CD4-positive, alpha-beta memory T cell (primary cell): ENCODE measurements at regions of chr7 and their contacts with region 1.

Region 1: GRCh38 chr7:138738551-138739335 is 37.6 kb upstream of the SVOPL start:
- DNase-seq: peak; percentile 74 to 81 (median 78)
- H3K4me3 ChIP-seq: no peak overlapping the region
- H3K4me3 Mint-ChIP-seq: no peak overlapping the region
- H3K27ac ChIP-seq: no peak overlapping the region
- H3K27ac Mint-ChIP-seq: peak overlapping the region in 5 of 7 donors; percentile 38 to 69 (median 45)
- H3K4me1 ChIP-seq: no peaks in the 10 kb centered on the region
- H3K4me1 Mint-ChIP-seq: peaks cover 2 to 6% (median 4%) of the 10 kb centered on the region in 4 donors
- H3K27me3 ChIP-seq: no peaks in the 10 kb centered on the region
- H3K27me3 Mint-ChIP-seq: peaks cover 0 to 1% of the 10 kb centered on the region in 2 donors

Region 2: GRCh38 chr7:138002096-138002827 is 736.5 kb before region 1 on chr7:
- CTCF ChIA-PET with region 1: interaction called, 4 read pairs
- POLR2A ChIA-PET with region 1: no interaction called
- intact Hi-C with region 1: loop called (anchors 1 kb)
- DNase-seq: peak; percentile 98 to 99 (median 99)
- H3K4me3 ChIP-seq: peak overlapping the region; percentile 86 to 99
- H3K4me3 Mint-ChIP-seq: peak overlapping the region; percentile 93 to 98 (median 95)
- H3K27ac ChIP-seq: peak overlapping the region; percentile 87
- H3K27ac Mint-ChIP-seq: peak overlapping the region; percentile 81 to 98 (median 92)
- H3K4me1 ChIP-seq: peaks cover 37% of the 10 kb centered on the region
- H3K4me1 Mint-ChIP-seq: peaks cover 28 to 50% (median 35%) of the 10 kb centered on the region in 4 donors
- H3K27me3 ChIP-seq: no peaks in the 10 kb centered on the region
- H3K27me3 Mint-ChIP-seq: no peaks in the 10 kb centered on the region

Region 3: GRCh38 chr7:138161600-138162081 is 577.1 kb before region 1 on chr7:
- CTCF ChIA-PET with region 1: interaction called, 99 read pairs
- POLR2A ChIA-PET with region 1: interaction called, 13 read pairs
- intact Hi-C with region 1: loop called (anchors 1 kb)
- DNase-seq: peak; percentile 71 to 82 (median 81)
- H3K4me3 ChIP-seq: no peak overlapping the region
- H3K4me3 Mint-ChIP-seq: no peak overlapping the region
- H3K27ac ChIP-seq: no peak overlapping the region
- H3K27ac Mint-ChIP-seq: no peak overlapping the region
- H3K4me1 ChIP-seq: no peaks in the 10 kb centered on the region
- H3K4me1 Mint-ChIP-seq: no peaks in the 10 kb centered on the region
- H3K27me3 ChIP-seq: no peaks in the 10 kb centered on the region
- H3K27me3 Mint-ChIP-seq: peaks cover 2 to 4% of the 10 kb centered on the region in 2 donors

Region 4: GRCh38 chr7:138166681-138167080 is 572.1 kb before region 1 on chr7:
- CTCF ChIA-PET with region 1: interaction called, 99 read pairs
- POLR2A ChIA-PET with region 1: interaction called, 13 read pairs
- intact Hi-C with region 1: loop called (anchors 1 kb)
- DNase-seq: no peak
- H3K4me3 ChIP-seq: no peak overlapping the region
- H3K4me3 Mint-ChIP-seq: no peak overlapping the region
- H3K27ac ChIP-seq: no peak overlapping the region
- H3K27ac Mint-ChIP-seq: no peak overlapping the region
- H3K4me1 ChIP-seq: no peaks in the 10 kb centered on the region
- H3K4me1 Mint-ChIP-seq: peaks cover 0 to 6% (median under 1%) of the 10 kb centered on the region in 4 donors
- H3K27me3 ChIP-seq: no peaks in the 10 kb centered on the region
- H3K27me3 Mint-ChIP-seq: peaks cover 17 to 23% of the 10 kb centered on the region in 2 donors

Region 5: DNA sequence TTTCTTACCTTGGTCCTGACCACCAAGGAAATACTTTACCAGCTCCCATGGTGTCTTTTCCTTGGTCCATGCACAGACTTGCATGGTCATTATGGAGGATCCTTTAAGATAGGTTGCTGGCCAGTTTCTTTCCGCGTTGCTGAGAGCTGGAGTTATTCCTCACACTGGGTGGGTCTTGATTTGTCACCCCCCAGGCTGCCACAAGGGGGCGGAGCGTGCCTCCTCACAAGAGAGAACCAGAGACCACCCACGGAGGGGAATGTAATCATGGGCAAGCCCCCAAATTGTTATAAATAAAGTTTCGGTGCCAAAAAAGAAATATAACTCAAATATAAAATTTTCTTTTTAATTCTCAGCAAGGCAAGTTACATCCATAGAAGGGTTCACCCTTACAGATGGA is 289.2 kb before region 1 on chr7:
- CTCF ChIA-PET with region 1: interaction called, 27 read pairs
- POLR2A ChIA-PET with region 1: no interaction called
- intact Hi-C with region 1: loop called (anchors 1 kb)
- DNase-seq: peak in 4 of 5 donors; percentile 12 to 30 (median 18)
- H3K4me3 ChIP-seq: no peak overlapping the region
- H3K4me3 Mint-ChIP-seq: no peak overlapping the region
- H3K27ac ChIP-seq: no peak overlapping the region
- H3K27ac Mint-ChIP-seq: peak overlapping the region in 1 of 7 donors; percentile 35
- H3K4me1 ChIP-seq: no peaks in the 10 kb centered on the region
- H3K4me1 Mint-ChIP-seq: no peaks in the 10 kb centered on the region
- H3K27me3 ChIP-seq: no peaks in the 10 kb centered on the region
- H3K27me3 Mint-ChIP-seq: peaks cover 0 to 4% of the 10 kb centered on the region in 2 donors

Region 6: DNA sequence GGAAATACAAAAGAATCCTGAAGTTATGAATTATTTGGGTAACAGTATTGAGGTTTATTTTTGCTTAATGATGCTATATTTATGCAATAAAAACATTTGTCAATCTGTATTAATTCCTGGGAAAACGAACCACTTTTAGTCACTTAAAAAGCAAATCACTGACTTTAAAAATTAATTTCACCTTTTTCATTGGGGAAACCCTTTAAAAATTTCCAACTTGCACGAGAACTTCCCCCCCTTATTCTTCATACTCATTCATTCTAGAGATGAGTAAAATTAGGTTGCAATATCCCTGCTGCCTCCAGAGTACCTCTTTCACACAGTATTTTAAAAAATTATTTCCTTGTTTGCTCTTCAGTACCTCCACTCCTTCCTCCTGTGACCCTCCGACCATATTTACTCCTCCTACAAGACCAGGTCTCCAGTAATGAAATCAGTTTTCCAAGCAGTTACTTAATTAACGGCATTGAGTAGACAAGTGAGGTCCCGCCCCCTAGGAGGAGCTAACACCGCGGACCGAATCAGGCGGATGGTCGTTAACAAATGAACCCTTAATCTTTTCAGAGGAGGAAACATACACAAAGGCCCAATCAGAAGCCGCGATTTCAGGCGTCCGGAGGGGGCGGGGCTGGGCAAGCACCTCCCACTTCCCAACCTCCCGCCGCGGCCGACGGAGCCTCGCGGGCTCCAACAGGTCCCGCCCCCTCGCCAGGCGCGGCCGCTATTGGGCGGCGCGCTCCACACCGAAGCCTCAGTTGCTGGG is 279.1 kb before region 1 on chr7:
- CTCF ChIA-PET with region 1: interaction called, 7 read pairs
- POLR2A ChIA-PET with region 1: no interaction called
- intact Hi-C with region 1: loop called (anchors 5 kb)
- DNase-seq: peak; percentile 98 to 99 (median 98)
- H3K4me3 ChIP-seq: peak overlapping the region in 1 of 2 donors; percentile 49
- H3K4me3 Mint-ChIP-seq: peak overlapping the region; percentile 73 to 94 (median 84)
- H3K27ac ChIP-seq: peak overlapping the region; percentile 2
- H3K27ac Mint-ChIP-seq: peak overlapping the region; percentile 58 to 95 (median 85)
- H3K4me1 ChIP-seq: peaks cover 15% of the 10 kb centered on the region
- H3K4me1 Mint-ChIP-seq: peaks cover 15 to 30% (median 23%) of the 10 kb centered on the region in 4 donors
- H3K27me3 ChIP-seq: no peaks in the 10 kb centered on the region
- H3K27me3 Mint-ChIP-seq: peaks cover 0 to 3% of the 10 kb centered on the region in 2 donors

Region 7: GRCh38 chr7:138865843-138866242 is 127.1 kb after region 1 on chr7:
- CTCF ChIA-PET with region 1: interaction called, 3 read pairs
- POLR2A ChIA-PET with region 1: no interaction called
- intact Hi-C with region 1: loop called (anchors 1 kb)
- DNase-seq: peak; percentile 36 to 56 (median 42)
- H3K4me3 ChIP-seq: no peak overlapping the region
- H3K4me3 Mint-ChIP-seq: no peak overlapping the region
- H3K27ac ChIP-seq: no peak overlapping the region
- H3K27ac Mint-ChIP-seq: peak overlapping the region in 3 of 7 donors; percentile 40 to 81 (median 55)
- H3K4me1 ChIP-seq: no peaks in the 10 kb centered on the region
- H3K4me1 Mint-ChIP-seq: peaks cover 0 to 5% (median 3%) of the 10 kb centered on the region in 4 donors
- H3K27me3 ChIP-seq: no peaks in the 10 kb centered on the region
- H3K27me3 Mint-ChIP-seq: peaks cover 0 to 4% of the 10 kb centered on the region in 2 donors

Region 8: DNA sequence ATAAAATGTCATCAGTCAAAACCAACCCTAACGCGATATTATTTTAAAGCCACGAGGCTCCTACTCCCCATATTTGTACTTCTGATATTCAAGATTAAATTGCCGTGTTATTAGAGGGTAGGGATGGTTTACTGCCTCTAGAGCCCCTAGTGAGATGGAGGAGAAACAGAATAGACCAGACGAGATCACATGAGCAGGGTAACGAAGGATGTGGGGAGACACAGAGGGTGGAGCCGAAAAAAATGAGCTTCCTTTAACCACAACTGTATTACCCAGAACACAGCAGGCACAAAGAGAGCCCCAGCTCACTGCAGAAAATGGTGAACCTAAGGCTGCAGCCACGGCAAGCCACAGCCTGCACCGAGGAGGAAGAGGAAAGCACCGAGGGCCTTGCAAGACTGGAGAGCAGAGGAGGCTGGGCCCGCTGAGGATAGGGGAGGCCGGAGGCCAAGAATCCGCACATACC is 356.5 kb after region 1 on chr7:
- CTCF ChIA-PET with region 1: no interaction called
- POLR2A ChIA-PET with region 1: no interaction called
- intact Hi-C with region 1: no loop called
- DNase-seq: peak; percentile 91 to 96 (median 94)
- H3K4me3 ChIP-seq: peak overlapping the region; percentile 34 to 39
- H3K4me3 Mint-ChIP-seq: peak overlapping the region; percentile 78 to 93 (median 88)
- H3K27ac ChIP-seq: peak overlapping the region; percentile 61
- H3K27ac Mint-ChIP-seq: peak overlapping the region; percentile 88 to 97 (median 93)
- H3K4me1 ChIP-seq: peaks cover 90% of the 10 kb centered on the region
- H3K4me1 Mint-ChIP-seq: peaks cover 62 to 94% (median 78%) of the 10 kb centered on the region in 4 donors
- H3K27me3 ChIP-seq: no peaks in the 10 kb centered on the region
- H3K27me3 Mint-ChIP-seq: no peaks in the 10 kb centered on the region